ENCODE measurements at regions of chr22 and their contacts with region 1.

Region 1: DNA sequence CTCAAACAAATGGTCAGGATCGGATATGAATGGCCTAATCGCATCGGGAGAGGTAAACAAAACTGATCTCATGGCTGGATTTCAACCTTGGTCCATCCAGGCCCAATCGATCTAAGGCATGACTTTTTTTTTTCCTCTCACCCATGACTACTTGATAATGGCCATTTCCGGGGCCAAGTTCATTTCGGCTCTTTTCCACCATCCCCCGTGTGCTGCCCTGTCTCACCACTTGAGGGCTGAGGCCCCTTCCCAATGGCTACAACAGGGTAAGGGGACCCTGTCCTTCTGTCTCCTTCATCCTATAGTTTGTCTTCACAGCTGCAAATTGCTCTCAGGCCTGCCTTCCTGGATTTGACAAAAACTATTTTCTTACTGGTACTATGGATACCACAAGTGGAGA is 26.7 kb downstream of the GRAP2 start:
- DNase-seq: no peak
- H3K4me3 ChIP-seq: peak overlapping the region; percentile 22 to 27
- H3K4me3 Mint-ChIP-seq: no peak overlapping the region
- H3K27ac ChIP-seq: peak overlapping the region; percentile 49
- H3K27ac Mint-ChIP-seq: peak overlapping the region in 1 of 7 donors; percentile 92
- H3K4me1 ChIP-seq: peaks cover 100% of the 10 kb centered on the region
- H3K4me1 Mint-ChIP-seq: peaks cover 36 to 42% (median 40%) of the 10 kb centered on the region in 4 donors
- H3K27me3 ChIP-seq: no peaks in the 10 kb centered on the region
- H3K27me3 Mint-ChIP-seq: no peaks in the 10 kb centered on the region

Region 2: GRCh38 chr22:39908737-39909136 is 18.8 kb before region 1 on chr22:
- CTCF ChIA-PET with region 1: interaction called, 15 read pairs
- POLR2A ChIA-PET with region 1: interaction called, 424 read pairs
- intact Hi-C with region 1: no loop called
- DNase-seq: peak in 1 of 5 donors; percentile 76
- H3K4me3 ChIP-seq: peak overlapping the region in 1 of 2 donors; percentile 57
- H3K4me3 Mint-ChIP-seq: peak overlapping the region; percentile 91 to 100 (median 97)
- H3K27ac ChIP-seq: peak overlapping the region; percentile 75
- H3K27ac Mint-ChIP-seq: peak overlapping the region in 6 of 7 donors; percentile 91 to 98 (median 96)
- H3K4me1 ChIP-seq: peaks cover 83% of the 10 kb centered on the region
- H3K4me1 Mint-ChIP-seq: peaks cover 53 to 89% (median 64%) of the 10 kb centered on the region in 4 donors
- H3K27me3 ChIP-seq: no peaks in the 10 kb centered on the region
- H3K27me3 Mint-ChIP-seq: no peaks in the 10 kb centered on the region

Region 3: DNA sequence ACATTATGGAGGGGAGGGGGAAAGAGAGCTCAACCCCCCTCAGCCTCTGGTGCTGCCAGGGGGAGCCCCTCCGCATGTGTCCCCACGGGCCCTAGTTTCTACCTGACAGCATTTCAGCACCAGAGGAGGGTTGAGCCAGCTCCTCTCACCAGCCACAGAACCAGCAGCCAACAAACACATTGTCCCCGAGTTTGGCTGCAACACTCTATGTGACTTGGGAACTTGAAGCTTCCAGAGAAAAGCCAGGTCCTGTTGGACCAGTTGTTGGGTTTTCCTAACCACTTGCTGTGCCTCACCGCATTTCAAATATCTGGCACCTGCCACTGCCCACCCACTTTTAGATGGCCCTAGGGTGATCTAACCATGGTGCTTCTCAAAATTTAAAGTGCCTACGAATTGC is 46.1 kb after region 1 on chr22:
- CTCF ChIA-PET with region 1: no interaction called
- POLR2A ChIA-PET with region 1: no interaction called
- intact Hi-C with region 1: no loop called
- DNase-seq: no peak
- H3K4me3 ChIP-seq: no peak overlapping the region
- H3K4me3 Mint-ChIP-seq: no peak overlapping the region
- H3K27ac ChIP-seq: no peak overlapping the region
- H3K27ac Mint-ChIP-seq: peak overlapping the region in 3 of 7 donors; percentile 8 to 30 (median 18)
- H3K4me1 ChIP-seq: no peaks in the 10 kb centered on the region
- H3K4me1 Mint-ChIP-seq: peaks cover 0 to 5% (median 2%) of the 10 kb centered on the region in 4 donors
- H3K27me3 ChIP-seq: no peaks in the 10 kb centered on the region
- H3K27me3 Mint-ChIP-seq: no peaks in the 10 kb centered on the region